ENCODE measurements at regions of chr1 and their contacts with region 1.

Region 1: GRCh38 chr1:9292361-9293240 is at the start of gene SPSB1:
- DNase-seq: peak; percentile 55
- H3K4me3 Mint-ChIP-seq: peak within 1 kb of the TSS; percentile 27
- H3K27ac Mint-ChIP-seq: no peak within 1 kb of the TSS
- H3K4me1 Mint-ChIP-seq: peaks cover 29% of the 10 kb centered on the region
- H3K27me3 Mint-ChIP-seq: no peaks in the 10 kb centered on the region
- total RNA-seq, gene SPSB1: 7.1 and 7.5 TPM in 2 replicates

Region 2: DNA sequence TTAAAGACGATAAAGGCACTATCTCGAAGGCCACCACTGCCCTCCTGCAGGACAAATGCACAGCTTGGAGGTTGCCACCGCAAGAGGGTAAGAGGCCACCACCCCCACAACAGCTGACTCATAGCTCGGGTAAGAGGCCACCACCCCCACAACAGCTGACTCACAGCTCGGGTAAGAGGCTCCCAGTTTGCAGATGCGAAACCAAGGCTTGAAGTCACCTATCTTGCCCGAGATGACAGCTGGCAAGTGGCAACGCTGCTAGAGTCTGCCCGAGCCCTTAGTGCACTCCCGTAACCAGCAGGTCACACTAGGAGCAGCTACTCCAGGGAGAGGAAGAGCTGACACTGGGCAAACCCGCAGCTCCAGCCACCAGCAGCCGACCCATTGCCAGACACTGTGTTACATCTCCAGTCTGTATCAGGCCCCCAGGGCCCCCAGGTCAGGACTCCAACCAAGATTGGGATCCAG is 17.0 kb before region 1 on chr1:
- intact Hi-C with region 1: loop called (anchors 2 kb)
- DNase-seq: peak; percentile 58
- H3K4me3 Mint-ChIP-seq: no peak overlapping the region
- H3K27ac Mint-ChIP-seq: peak overlapping the region; percentile 25
- H3K4me1 Mint-ChIP-seq: peaks cover 33% of the 10 kb centered on the region
- H3K27me3 Mint-ChIP-seq: no peaks in the 10 kb centered on the region

Region 3: GRCh38 chr1:9315411-9316079 is 22.9 kb after region 1 on chr1:
- intact Hi-C with region 1: loop called (anchors 1 kb)
- DNase-seq: peak; percentile 55
- H3K4me3 Mint-ChIP-seq: peak overlapping the region; percentile 57
- H3K27ac Mint-ChIP-seq: peak overlapping the region; percentile 89
- H3K4me1 Mint-ChIP-seq: peaks cover 35% of the 10 kb centered on the region
- H3K27me3 Mint-ChIP-seq: no peaks in the 10 kb centered on the region

Region 4: DNA sequence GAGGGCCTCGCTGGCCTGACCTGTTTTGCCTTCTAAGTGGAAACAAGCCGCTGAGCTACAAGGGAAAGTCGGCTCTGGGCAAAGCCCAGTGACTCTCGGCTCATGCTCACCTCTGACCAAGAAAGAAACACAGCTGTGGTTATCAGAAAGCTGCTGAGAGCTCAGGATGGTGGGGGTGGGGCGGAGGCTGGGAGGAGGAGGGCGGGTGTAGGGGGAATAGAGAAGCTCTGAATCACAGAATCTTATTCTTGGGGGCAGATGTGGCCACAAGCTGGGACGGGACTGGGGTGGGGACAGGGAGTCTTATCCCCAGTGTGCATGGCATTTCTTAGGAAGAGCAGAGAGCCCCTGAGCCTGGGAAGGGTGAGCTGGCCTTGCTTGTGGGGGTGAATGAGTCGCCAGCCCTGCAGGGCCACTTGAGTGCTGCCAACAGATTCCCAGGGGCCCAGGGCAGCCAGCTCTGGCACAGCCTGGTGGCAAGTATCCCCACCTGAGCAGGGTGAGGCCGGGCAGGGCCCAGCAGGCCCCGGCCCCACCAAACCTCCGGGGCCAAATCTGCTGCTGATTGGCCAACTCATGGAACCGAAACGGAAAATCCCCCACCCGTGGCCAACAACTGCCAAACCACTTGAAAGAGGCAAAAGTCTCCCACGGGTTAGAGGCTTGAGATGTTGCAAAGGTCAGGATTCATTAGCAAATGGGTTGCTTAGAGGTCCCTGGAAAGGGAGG is 120.7 kb after region 1 on chr1:
- intact Hi-C with region 1: loop called (anchors 2 kb)
- DNase-seq: peak; percentile 58
- H3K4me3 Mint-ChIP-seq: no peak overlapping the region
- H3K27ac Mint-ChIP-seq: peak overlapping the region; percentile 48
- H3K4me1 Mint-ChIP-seq: peaks cover 36% of the 10 kb centered on the region
- H3K27me3 Mint-ChIP-seq: peaks cover 4% of the 10 kb centered on the region

Region 5: GRCh38 chr1:9428601-9429341 is 136.2 kb after region 1 on chr1:
- intact Hi-C with region 1: loop called (anchors 5 kb)
- DNase-seq: peak; percentile 100
- H3K4me3 Mint-ChIP-seq: peak overlapping the region; percentile 91
- H3K27ac Mint-ChIP-seq: peak overlapping the region; percentile 95
- H3K4me1 Mint-ChIP-seq: peaks cover 38% of the 10 kb centered on the region
- H3K27me3 Mint-ChIP-seq: peaks cover 7% of the 10 kb centered on the region

Region 6: DNA sequence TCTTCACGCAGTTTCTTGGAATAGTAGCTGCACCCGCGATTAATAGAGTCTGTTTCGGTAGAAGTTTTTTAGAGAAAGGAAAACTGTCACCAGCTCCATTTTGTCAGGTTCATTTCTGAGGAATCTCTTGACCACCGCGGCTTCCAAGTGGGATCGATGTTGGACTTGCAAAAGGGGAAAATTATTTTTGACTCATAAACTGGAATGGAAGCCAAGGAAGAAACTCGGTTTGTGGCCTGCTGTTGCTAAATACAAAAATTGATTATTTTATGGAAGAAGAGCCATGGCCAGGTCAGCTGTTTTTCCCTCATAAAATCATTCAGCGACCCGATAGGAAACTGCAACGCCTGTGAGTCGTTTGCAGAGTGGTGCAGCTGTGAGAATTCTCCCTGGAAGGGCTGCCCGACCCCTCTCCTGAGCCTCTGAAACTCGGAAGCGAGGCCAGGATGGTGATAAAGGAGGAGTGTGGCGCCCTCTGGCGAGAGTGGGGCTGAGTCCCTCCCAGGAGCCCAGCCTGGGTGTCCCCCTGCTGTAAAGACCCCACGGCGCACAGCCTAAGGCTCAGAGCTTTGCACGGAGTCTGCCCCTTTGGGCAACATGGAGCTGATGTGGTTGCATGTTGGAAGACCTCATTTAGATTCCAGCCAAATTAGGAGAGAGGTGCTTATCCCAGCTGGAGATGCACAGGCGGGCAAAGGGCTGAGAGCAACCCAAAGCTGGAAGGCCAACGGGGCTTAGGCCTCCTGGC is 163.1 kb after region 1 on chr1:
- intact Hi-C with region 1: loop called (anchors 1 kb)
- DNase-seq: peak; percentile 37
- H3K4me3 Mint-ChIP-seq: no peak overlapping the region
- H3K27ac Mint-ChIP-seq: no peak overlapping the region
- H3K4me1 Mint-ChIP-seq: no peaks in the 10 kb centered on the region
- H3K27me3 Mint-ChIP-seq: peaks cover 9% of the 10 kb centered on the region

Region 7: DNA sequence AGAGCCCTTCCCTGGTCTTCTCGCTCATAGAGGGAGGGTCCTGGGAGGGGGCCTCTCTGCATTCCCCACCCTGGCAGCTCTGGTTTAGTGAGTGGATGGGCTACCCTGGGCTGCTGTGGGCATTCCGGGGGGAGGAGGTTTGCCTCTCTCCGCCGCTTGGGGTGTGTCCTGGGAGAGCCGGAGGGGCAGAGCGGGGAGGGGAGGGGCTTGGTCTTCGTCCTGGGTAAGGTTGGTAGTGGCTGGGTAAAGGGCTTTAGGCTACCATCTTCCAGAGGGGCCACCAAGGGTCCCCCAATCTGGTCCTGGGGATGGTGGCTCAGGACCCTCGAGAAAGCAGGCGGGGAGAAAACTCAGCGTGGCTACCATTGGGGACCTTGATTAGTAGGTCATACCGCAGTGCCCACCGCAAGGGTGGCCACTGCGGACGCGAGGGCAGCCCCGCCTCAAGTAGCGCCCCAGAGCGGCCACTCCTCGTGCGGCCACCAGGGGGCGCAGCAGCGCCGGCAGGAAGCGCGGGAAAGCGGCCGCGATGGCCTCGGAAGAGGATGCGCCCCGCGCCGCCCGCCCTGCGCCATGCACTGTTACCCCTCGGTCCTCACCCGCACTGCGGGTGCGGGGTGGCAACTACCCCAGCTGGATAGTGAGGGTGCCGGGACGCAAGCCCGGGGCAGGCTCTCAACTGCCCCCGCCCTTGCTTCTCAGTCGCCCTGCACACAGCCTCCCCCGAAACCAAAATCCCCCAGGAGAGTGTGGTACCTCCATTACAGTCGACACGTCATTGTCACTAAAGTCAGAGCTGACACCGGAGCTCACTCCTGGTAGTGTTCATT is 202.5 kb after region 1 on chr1:
- intact Hi-C with region 1: loop called (anchors 1 kb)
- DNase-seq: peak; percentile 56
- H3K4me3 Mint-ChIP-seq: peak overlapping the region; percentile 51
- H3K27ac Mint-ChIP-seq: peak overlapping the region; percentile 17
- H3K4me1 Mint-ChIP-seq: peaks cover 13% of the 10 kb centered on the region
- H3K27me3 Mint-ChIP-seq: peaks cover 20% of the 10 kb centered on the region

Region 8: GRCh38 chr1:10082785-10083479 is 790.3 kb after region 1 on chr1:
- intact Hi-C with region 1: no loop called
- DNase-seq: no peak
- H3K4me3 Mint-ChIP-seq: no peak overlapping the region
- H3K27ac Mint-ChIP-seq: no peak overlapping the region
- H3K4me1 Mint-ChIP-seq: no peaks in the 10 kb centered on the region
- H3K27me3 Mint-ChIP-seq: no peaks in the 10 kb centered on the region